Vagina (tissue), 2 donors: ENCODE measurements at regions of chr12 and their contacts with region 1.

Region 1: DNA sequence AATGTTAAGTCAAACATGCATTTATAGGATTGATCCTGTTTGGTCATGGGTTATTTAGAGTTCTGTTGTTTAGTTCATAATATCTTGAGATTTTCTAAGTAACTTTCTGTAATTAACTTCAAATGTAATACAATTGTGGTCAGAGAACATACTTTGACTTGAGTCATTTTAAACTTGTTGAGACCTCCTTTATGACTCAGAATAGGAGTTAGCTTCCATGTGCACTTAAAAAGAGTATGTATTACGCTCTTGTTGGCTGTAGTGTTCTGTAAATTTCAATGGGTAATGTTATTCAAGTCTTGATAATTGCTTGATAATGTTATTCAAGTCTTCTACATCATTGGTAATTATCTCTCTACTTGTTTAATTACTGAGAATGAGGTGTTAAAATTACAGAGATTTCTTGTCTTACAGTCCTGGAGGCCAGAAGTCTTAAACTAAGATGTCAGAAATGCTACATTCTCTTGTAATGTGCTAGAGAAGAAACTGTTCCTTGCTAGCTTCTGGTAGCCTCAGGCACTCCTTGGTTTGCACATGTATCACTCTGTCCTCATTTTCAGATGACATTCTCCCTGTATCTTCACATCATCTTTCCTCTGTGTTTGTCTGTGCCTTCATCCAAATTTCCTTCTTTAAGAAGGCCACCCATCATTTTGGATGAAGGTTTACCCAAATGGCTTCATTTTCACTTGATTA is 197.3 kb downstream of the TMTC3 start:
- DNase-seq: no peak
- H3K4me3 ChIP-seq: no peak overlapping the region
- H3K27ac ChIP-seq: no peak overlapping the region
- H3K4me1 ChIP-seq: peaks cover 4% of the 10 kb centered on the region
- H3K27me3 ChIP-seq: no peaks in the 10 kb centered on the region
- CTCF ChIP-seq: no peak
- POLR2A ChIP-seq: no peak

Region 2: DNA sequence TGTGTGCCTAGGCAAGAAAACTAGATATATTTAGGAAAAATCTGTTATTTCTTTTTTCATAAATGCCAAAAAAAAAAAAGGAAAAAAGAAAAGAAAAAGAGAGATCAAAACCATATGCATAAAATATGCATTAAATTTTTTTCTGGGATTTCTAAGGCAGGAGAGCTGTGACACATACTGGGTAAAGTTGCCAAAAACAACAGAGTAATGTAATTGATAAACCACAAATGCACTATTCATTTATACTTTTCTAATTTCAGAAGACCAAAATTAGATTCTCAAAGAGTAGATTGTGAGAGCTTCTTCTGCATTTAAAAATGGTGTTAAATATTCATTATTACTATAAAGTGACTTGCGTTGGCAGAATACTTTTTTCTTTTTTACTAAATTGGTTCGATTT is 1409.4 kb before region 1 on chr12:
- intact Hi-C with region 1: loop called (anchors 5 kb)
- DNase-seq: no peak
- H3K4me3 ChIP-seq: no peak overlapping the region
- H3K27ac ChIP-seq: no peak overlapping the region
- H3K4me1 ChIP-seq: no peaks in the 10 kb centered on the region
- H3K27me3 ChIP-seq: no peaks in the 10 kb centered on the region
- CTCF ChIP-seq: no peak
- POLR2A ChIP-seq: no peak

Region 3: DNA sequence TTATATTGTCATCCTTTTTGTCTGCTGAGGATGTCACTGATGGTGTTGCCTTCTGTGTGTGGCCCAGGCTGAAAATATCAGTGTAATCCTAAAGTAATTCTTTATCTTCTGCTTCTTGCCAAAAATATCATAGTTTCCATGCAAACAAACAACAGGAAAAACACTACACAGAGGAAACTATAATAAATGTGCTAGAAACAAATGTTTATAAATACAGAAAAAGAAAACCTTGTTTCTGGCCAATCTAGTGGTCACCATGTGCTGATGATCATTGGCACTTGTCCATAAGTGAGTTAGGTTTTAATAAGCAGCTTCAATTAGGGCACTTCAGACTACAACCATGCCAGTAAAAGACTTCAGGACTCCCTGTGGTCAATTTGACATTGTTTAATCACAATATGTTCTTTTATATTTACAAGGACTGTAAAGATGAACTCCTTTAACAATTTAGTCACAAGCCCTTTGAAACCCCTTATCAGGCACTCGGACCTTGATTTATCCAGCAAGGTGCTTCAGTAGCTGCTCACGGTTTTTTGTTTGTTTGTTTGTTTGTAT is 72.5 kb before region 1 on chr12:
- intact Hi-C with region 1: no loop called
- DNase-seq: no peak
- H3K4me3 ChIP-seq: no peak overlapping the region
- H3K27ac ChIP-seq: no peak overlapping the region
- H3K4me1 ChIP-seq: no peaks in the 10 kb centered on the region
- H3K27me3 ChIP-seq: no peaks in the 10 kb centered on the region
- CTCF ChIP-seq: no peak
- POLR2A ChIP-seq: no peak